Activated T-helper 1 cell treated with anti-CD3 and anti-CD28 coated beads, Interleukin-12 subunit alpha, Interleukin-12 subunit beta, Interleukin-2, Interleukin-4 antibody, amounts not matched to agents 30 ng/mL and 10 ng/mL and 1 ng/mL, durations not matched to agents 14 hours and 24 hours and 36 hours (primary cell): ENCODE measurements at regions of chr10 and their contacts with region 1.

Region 1: GRCh38 chr10:37976091-37976879 is at the start of gene ZNF25:
- DNase-seq: peak; percentile 95
- H3K4me3 Mint-ChIP-seq: peak within 1 kb of the TSS; percentile 91
- H3K27ac Mint-ChIP-seq: peak within 1 kb of the TSS; percentile 95
- H3K4me1 Mint-ChIP-seq: peaks cover 31% of the 10 kb centered on the region
- H3K27me3 Mint-ChIP-seq: no peaks in the 10 kb centered on the region
- total RNA-seq, gene ZNF25: 6.4 and 8.1 TPM in 2 replicates

Region 2: DNA sequence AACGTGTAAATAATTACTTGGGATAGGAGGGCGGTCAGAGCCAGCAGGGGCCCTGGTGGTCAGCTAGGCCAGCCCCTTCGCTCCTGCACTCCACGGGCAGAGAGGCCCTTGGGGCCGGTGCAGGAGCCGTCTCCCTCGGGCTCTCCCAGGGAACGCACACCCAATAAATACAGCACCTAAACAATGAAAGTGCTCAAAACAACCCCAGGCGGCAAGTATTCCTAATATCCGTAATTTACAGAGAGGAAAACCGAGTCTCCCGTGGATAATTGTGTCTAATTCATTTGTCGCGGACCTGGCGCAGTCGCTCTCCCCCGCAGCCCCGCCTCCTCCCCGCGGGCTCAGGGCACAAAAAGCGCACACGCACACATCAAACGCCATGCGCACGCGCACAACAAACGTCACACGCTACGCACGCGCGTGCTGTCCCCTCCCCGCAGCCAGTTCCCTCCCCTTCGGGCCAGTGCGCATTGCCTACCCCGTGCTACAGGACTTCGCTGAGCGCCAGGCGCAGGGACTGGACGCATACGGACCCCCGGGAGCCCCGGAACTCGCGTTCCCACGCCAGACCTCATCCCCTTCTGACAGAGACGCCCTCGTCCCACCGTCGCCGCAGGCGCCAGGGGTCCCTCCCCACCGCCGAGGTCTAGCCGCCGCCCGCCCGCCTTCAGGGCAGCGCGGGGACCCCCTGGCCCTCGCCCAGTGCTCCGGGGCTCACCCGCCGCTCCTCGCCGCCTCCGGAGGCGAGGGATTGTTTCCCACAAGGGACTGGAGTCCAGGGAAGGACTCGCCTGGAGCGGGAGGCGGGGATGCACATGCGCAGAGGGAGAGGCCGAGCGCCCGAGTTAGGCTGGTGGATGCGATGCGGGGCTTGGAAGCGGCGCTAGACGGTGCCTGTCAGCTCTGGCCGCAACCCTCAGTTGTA is 118.7 kb before region 1 on chr10 and contains the start of gene ZNF248:
- intact Hi-C with region 1: loop called (anchors 1 kb)
- DNase-seq: peak; percentile 94
- H3K4me3 Mint-ChIP-seq: peak within 1 kb of the TSS; percentile 89
- H3K27ac Mint-ChIP-seq: peak within 1 kb of the TSS; percentile 95
- H3K4me1 Mint-ChIP-seq: peaks cover 30% of the 10 kb centered on the region
- H3K27me3 Mint-ChIP-seq: no peaks in the 10 kb centered on the region
- total RNA-seq, gene ZNF248: 7.7 and 7.9 TPM in 2 replicates

Region 3: DNA sequence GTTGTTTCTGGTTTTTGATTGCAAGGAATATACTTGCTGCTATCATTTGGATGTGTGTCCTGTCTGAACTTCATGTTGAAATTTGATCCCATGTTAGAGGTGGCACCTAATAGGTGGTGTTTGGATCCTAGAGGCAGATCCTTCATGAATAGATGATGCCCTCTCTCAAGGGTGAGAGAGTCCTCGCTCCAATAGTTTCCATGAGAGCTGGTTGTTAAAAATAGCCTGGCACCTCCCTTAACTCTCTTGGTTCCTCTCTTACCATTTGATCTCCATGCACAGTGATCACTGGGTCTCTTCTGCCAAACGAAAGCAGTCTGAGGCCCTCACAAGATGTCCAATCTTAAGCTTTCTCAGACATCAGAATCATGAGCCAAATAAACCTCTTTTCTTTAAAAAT is 69.9 kb before region 1 on chr10:
- intact Hi-C with region 1: no loop called
- DNase-seq: no peak
- H3K4me3 Mint-ChIP-seq: no peak overlapping the region
- H3K27ac Mint-ChIP-seq: no peak overlapping the region
- H3K4me1 Mint-ChIP-seq: no peaks in the 10 kb centered on the region
- H3K27me3 Mint-ChIP-seq: no peaks in the 10 kb centered on the region

Region 4: GRCh38 chr10:38038107-38038931 is 62.0 kb after region 1 on chr10:
- intact Hi-C with region 1: loop called (anchors 2 kb)
- DNase-seq: no peak
- H3K4me3 Mint-ChIP-seq: peak overlapping the region; percentile 86
- H3K27ac Mint-ChIP-seq: peak overlapping the region; percentile 91
- H3K4me1 Mint-ChIP-seq: peaks cover 20% of the 10 kb centered on the region
- H3K27me3 Mint-ChIP-seq: no peaks in the 10 kb centered on the region